ENCODE measurements at regions of chr17 and their contacts with region 1.

Region 1: DNA sequence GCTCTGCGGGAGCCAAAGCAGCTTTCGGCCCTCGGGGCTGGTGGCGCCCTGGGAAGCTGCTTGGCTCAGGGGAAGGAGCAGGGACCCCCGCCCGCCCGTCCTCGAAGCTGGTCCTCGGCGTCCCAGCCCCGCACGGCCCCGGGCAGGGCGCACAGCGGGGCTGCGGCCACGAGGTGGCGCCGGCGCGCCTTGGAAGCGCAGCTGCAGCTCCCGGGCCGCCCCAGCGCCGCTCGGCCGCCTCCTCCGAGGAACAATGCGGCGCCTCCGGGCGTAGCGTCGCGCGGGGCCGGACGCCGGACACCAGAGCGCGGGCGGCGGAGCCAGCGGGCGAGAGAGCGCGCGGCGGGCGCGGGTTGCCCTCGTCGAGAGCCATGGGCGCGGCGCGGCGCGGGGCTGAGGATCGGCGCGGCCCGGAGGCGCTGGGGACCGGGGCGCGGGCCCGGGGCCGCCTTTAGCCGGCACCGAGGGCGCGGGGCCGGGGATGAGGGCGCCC is at the start of gene MGAT5B:
- DNase-seq: peak; percentile 87 to 96
- ATAC-seq: peak; percentile 69 to 84
- H3K4me3 ChIP-seq: peak within 1 kb of the TSS; percentile 70
- H3K27ac ChIP-seq: peak within 1 kb of the TSS; percentile 93 to 97
- H3K4me1 ChIP-seq: peaks cover 52% of the 10 kb centered on the region
- CTCF ChIP-seq: peak; percentile 99
- EP300 ChIP-seq: no peak
- POLR2A ChIP-seq: peak; percentile 38
- RAD21 ChIP-seq: peak; percentile 84 to 100
- polyA plus RNA-seq, gene MGAT5B: 7.6 and 10.3 TPM in 2 replicates

Region 2: GRCh38 chr17:76797241-76797840 is 70.9 kb before region 1 on chr17:
- CTCF ChIA-PET with region 1: interaction called, 13 read pairs
- POLR2A ChIA-PET with region 1: no interaction called
- DNase-seq: no peak
- ATAC-seq: no peak
- H3K4me3 ChIP-seq: no peak overlapping the region
- H3K27ac ChIP-seq: no peak overlapping the region
- H3K4me1 ChIP-seq: peaks cover 6% of the 10 kb centered on the region; the same call in 1 of the 3 replicates
- CTCF ChIP-seq: no peak
- EP300 ChIP-seq: no peak
- POLR2A ChIP-seq: no peak
- RAD21 ChIP-seq: no peak

Region 3: GRCh38 chr17:76826330-76827068 is 41.7 kb before region 1 on chr17:
- CTCF ChIA-PET with region 1: interaction called, 34 read pairs
- POLR2A ChIA-PET with region 1: no interaction called
- DNase-seq: no peak
- ATAC-seq: peak; percentile 15 to 20; a peak in 1 of 6 replicates
- H3K4me3 ChIP-seq: no peak overlapping the region
- H3K27ac ChIP-seq: no peak overlapping the region
- H3K4me1 ChIP-seq: no peaks in the 10 kb centered on the region
- CTCF ChIP-seq: no peak
- EP300 ChIP-seq: no peak
- POLR2A ChIP-seq: no peak
- RAD21 ChIP-seq: no peak

Region 4: GRCh38 chr17:76901542-76902197 is 33.4 kb after region 1 on chr17:
- CTCF ChIA-PET with region 1: interaction called, 17 read pairs
- POLR2A ChIA-PET with region 1: no interaction called
- DNase-seq: no peak
- ATAC-seq: no peak
- H3K4me3 ChIP-seq: no peak overlapping the region
- H3K27ac ChIP-seq: no peak overlapping the region
- H3K4me1 ChIP-seq: no peaks in the 10 kb centered on the region
- CTCF ChIP-seq: no peak
- EP300 ChIP-seq: no peak
- POLR2A ChIP-seq: no peak
- RAD21 ChIP-seq: no peak

Region 5: DNA sequence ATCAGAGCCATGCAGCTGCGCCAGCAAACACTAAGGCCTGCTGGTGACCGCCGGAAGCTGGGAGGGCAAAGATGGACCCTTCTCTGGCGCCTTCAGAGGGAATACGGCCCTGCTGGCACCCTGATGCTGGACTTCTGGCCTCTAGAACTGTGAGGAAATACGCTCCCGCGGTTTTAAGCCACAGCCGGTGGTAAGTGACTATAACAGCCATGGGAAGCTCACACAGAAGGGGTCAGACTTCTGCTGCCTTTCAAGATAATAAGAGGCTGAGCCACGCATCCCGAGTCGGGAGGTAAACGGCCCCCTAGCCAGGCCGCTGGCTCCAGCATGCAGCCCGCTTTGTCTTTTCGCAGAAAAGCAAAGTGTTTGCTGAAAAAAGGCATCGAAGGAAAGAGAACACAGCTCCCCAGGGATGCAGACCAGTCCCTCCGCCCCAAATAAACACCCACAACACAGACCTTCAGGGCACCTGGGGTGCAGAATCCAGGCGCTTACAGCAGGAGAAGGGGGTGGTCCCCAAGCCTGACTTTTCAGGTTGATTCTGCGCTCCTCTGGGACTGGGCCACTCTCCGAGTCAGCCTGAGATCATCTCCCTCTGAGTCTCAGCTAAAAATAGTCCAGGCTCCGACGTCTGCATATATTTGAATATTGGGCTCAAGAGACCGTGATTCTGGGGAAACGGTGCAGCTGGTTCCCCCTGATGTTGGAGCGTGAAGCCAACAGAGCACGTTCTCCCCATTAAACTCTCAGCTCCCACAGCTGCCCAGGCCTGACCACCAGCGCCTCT is 89.6 kb after region 1 on chr17:
- CTCF ChIA-PET with region 1: interaction called, 16 read pairs
- POLR2A ChIA-PET with region 1: no interaction called
- DNase-seq: no peak
- ATAC-seq: peak in 1 of 2 experiments; percentile 11; a peak in 3 of 6 replicates
- H3K4me3 ChIP-seq: no peak overlapping the region
- H3K27ac ChIP-seq: peak overlapping the region in 1 of 2 experiments; percentile 32; a peak in 3 of 6 replicates
- H3K4me1 ChIP-seq: no peaks in the 10 kb centered on the region
- CTCF ChIP-seq: no peak
- EP300 ChIP-seq: no peak
- POLR2A ChIP-seq: no peak
- RAD21 ChIP-seq: no peak

Region 6: DNA sequence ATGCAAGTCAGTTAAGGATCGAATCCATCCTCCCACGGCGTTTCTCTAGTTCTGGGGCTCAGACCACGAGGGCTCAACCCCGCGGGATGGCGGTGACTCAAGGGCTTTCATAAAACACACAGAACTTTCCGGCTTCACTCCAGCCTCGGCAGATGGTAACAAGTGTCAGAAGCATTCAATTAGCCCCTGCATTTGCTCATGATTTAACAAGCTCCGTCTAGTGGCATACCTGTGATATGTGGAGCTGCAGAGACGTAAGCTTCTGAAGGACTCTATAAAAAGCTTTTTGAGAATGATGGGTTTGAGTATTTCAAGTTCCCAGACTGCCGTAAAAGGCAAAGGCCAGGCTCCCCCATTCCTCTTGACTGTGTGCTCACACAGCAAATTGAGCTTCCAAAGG is 181.2 kb after region 1 on chr17:
- CTCF ChIA-PET with region 1: interaction called, 776 read pairs
- POLR2A ChIA-PET with region 1: interaction called, 3 read pairs
- DNase-seq: no peak
- ATAC-seq: no peak
- H3K4me3 ChIP-seq: no peak overlapping the region
- H3K27ac ChIP-seq: peak overlapping the region in 1 of 2 experiments; percentile 2; a peak in 1 of 6 replicates
- H3K4me1 ChIP-seq: peaks cover 14% of the 10 kb centered on the region
- CTCF ChIP-seq: no peak
- EP300 ChIP-seq: no peak
- POLR2A ChIP-seq: no peak
- RAD21 ChIP-seq: no peak